CD8-positive, alpha-beta T cell (primary cell): ENCODE measurements at regions of chr10 and their contacts with region 1.

Region 1: GRCh38 chr10:27360581-27361172 is 120.1 kb upstream of the ACBD5 start:
- DNase-seq: peak; percentile 63 to 89 (median 83)
- ATAC-seq: peak; percentile 99
- H3K4me3 ChIP-seq: no peak overlapping the region
- H3K4me3 Mint-ChIP-seq: no peak overlapping the region
- H3K27ac ChIP-seq: no peak overlapping the region
- H3K27ac Mint-ChIP-seq: no peak overlapping the region
- H3K4me1 ChIP-seq: no peaks in the 10 kb centered on the region
- H3K4me1 Mint-ChIP-seq: no peaks in the 10 kb centered on the region
- H3K27me3 ChIP-seq: no peaks in the 10 kb centered on the region
- H3K27me3 Mint-ChIP-seq: no peaks in the 10 kb centered on the region
- CTCF ChIP-seq: peak; percentile 99

Region 2: GRCh38 chr10:27019827-27020226 is 340.9 kb before region 1 on chr10:
- CTCF ChIA-PET with region 1: no interaction called
- POLR2A ChIA-PET with region 1: no interaction called
- intact Hi-C with region 1: loop called in 1 of 2 experiments (anchors 10 kb)
- DNase-seq: no peak
- ATAC-seq: no peak
- H3K4me3 ChIP-seq: no peak overlapping the region
- H3K4me3 Mint-ChIP-seq: no peak overlapping the region
- H3K27ac ChIP-seq: no peak overlapping the region
- H3K27ac Mint-ChIP-seq: no peak overlapping the region
- H3K4me1 ChIP-seq: peaks cover 10% of the 10 kb centered on the region
- H3K4me1 Mint-ChIP-seq: peaks cover 12% of the 10 kb centered on the region
- H3K27me3 ChIP-seq: no peaks in the 10 kb centered on the region
- H3K27me3 Mint-ChIP-seq: no peaks in the 10 kb centered on the region
- CTCF ChIP-seq: no peak

Region 3: DNA sequence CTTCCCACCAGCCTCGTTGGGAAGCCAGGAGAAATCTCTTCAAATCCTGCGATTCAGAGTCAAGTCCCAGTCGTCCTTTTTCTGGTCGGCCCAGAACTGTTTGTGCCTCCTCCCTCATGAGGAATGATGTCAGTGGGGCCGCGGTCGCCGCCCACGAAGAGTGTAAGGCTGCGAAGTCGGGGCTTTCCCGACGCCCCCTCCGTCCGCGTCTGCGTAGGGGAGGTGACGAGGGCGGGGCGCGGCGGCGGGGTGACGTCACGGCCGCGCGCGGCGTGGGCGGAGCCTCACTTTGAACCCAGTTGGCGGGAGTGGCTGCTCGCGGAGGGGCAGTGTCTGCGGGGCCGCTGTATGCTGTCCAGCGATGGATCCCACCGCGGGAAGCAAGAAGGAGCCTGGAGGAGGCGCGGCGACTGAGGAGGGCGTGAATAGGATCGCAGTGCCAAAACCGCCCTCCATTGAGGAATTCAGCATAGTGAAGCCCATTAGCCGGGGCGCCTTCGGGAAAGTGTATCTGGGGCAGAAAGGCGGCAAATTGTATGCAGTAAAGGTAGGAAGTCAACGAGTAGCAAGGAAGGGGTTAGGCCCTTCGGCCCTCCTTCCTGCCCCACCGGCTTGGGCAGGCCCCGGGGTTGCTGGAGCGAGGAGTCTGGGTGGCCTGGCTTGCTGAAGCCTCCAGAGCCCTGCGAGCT is 205.5 kb before region 1 on chr10 and contains the start of gene MASTL:
- CTCF ChIA-PET with region 1: interaction called, 3 read pairs
- POLR2A ChIA-PET with region 1: no interaction called
- intact Hi-C with region 1: loop called in 1 of 2 experiments (anchors 5 kb)
- DNase-seq: peak; percentile 90 to 98 (median 93)
- ATAC-seq: peak; percentile 82
- H3K4me3 ChIP-seq: peak within 1 kb of the TSS; percentile 84 to 98
- H3K4me3 Mint-ChIP-seq: peak within 1 kb of the TSS; percentile 99
- H3K27ac ChIP-seq: peak within 1 kb of the TSS; percentile 100
- H3K27ac Mint-ChIP-seq: peak within 1 kb of the TSS; percentile 100
- H3K4me1 ChIP-seq: peaks cover 27% of the 10 kb centered on the region
- H3K4me1 Mint-ChIP-seq: peaks cover 49% of the 10 kb centered on the region
- H3K27me3 ChIP-seq: no peaks in the 10 kb centered on the region
- H3K27me3 Mint-ChIP-seq: no peaks in the 10 kb centered on the region
- CTCF ChIP-seq: no peak
- total RNA-seq, gene MASTL: 33.4 to 33.6 TPM